Activated CD4-positive, alpha-beta T cell treated with anti-CD3 and anti-CD28 coated beads, Interleukin-2, amount 10 ng/mL, durations not matched to agents 24 days and 14 days (primary cell): ENCODE measurements at regions of chr7 and their contacts with region 1.

Region 1: DNA sequence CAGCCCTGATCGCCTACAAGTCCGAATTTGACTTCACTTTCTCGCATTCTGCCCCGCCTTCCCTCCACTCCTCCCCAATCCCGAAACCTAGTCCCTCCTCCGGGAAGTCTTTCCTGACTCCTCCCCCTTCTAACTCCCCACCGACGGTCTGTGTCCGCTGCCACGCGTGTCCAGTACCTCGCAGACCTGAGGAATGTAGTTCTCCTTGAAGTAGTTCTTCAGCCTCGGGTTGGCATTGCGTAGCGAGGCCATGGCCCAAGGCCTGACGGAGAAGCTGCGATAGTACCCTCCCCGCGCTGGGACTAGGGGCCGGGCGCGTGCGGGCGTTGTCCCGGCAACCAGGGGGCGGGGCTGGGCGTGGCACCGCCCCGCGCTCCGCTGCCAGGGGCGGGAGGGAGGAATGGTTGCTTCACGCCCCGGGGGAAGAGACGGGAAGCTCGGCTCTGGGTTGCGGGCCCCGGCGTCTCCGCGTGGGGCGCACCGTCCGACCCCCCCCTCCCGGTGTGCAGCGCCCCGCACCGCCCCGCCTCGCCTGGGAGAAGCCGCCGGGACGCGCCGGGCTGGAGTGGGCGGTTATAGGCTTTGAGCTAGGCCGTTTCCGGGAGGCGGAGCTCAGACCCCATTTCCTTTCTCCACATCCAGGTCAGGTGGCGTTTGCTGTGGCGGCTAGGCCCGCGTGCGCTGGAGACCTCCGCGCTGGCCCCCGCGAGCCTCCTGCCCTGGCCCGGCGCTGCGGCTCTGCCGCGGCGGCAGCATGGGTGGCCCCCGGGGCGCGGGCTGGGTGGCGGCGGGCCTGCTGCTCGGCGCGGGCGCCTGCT is at the starts of genes ARMC10 and FBXL13:
- DNase-seq: peak; percentile 96
- H3K4me3 Mint-ChIP-seq: peak within 1 kb of the TSS; percentile 95
- H3K27ac Mint-ChIP-seq: peak within 1 kb of the TSS; percentile 92
- H3K4me1 Mint-ChIP-seq: peaks cover 28% of the 10 kb centered on the region
- H3K27me3 Mint-ChIP-seq: no peaks in the 10 kb centered on the region
- total RNA-seq, gene ARMC10: 53.4 and 56.5 TPM in 2 replicates
- total RNA-seq, gene FBXL13: 0.09 and 0.99 TPM in 2 replicates

Region 2: DNA sequence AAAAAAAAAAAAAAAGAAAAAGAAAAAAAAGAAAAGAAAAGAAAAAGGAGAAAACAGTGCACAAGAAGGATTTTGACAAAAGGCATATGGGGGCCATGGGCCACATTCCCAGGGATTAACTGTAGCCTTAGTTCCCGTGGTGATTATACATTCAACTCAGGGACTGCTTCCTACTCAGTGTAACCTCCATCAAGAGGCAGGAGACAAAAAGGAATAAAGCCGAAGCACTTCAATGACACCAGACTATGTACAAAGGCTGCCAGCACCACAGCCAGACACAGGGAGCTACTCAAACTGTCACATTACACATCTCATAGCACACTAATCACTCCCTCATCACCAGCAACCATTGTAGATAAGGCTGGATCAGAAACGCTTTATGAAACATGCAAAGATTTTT is 217.4 kb after region 1 on chr7:
- intact Hi-C with region 1: loop called (anchors 10 kb)
- DNase-seq: no peak
- H3K4me3 Mint-ChIP-seq: no peak overlapping the region
- H3K27ac Mint-ChIP-seq: no peak overlapping the region
- H3K4me1 Mint-ChIP-seq: peaks cover 6% of the 10 kb centered on the region
- H3K27me3 Mint-ChIP-seq: peaks cover 32% of the 10 kb centered on the region